ENCODE measurements at regions of chr3 and their contacts with region 1.

Region 1: GRCh38 chr3:143972505-143973255 is 1.1 kb downstream of the DIPK2A start:
- DNase-seq: peak; percentile 48 to 93 (median 76)

Region 2: DNA sequence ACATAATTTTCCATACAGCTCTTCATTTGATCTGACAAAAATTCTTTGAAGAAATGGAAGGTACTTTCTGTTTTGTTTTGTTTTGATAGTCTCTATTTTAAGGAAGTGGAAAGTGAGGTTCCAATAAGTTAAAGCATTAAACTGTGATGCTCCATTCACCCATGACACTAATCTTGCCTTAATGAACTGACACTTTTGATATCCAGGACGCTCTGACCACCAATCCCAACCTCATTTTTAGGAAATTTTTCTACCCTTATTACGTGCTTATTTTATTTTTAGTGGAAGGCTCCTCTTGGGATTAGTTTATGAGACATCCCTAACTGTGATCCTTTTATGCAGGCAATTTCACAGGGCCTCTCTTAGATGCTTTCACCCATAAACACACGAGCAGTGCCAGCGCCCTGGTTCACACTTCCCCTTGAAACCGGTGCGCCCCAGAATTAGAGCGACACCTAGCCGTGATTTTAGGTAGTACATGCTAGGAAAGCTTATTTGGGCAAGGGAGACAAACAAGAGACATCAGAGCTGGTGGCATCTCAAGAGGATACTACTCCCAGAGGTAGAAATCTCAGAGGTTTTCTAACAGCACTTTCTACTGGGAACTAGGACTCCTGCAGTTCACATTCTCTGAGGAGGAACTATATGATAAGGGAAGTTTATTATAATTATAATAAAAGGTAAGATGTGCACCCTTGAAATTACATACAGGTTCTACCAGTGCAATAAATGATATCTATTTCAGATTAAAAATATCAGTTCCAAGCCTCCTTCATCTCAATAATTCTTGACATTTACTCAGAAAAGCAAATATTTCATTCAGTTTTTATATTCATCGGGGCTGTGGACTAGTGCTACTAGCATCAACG is 298.3 kb before region 1 on chr3:
- intact Hi-C with region 1: no loop called
- DNase-seq: peak; percentile 25 to 90 (median 69)

Region 3: DNA sequence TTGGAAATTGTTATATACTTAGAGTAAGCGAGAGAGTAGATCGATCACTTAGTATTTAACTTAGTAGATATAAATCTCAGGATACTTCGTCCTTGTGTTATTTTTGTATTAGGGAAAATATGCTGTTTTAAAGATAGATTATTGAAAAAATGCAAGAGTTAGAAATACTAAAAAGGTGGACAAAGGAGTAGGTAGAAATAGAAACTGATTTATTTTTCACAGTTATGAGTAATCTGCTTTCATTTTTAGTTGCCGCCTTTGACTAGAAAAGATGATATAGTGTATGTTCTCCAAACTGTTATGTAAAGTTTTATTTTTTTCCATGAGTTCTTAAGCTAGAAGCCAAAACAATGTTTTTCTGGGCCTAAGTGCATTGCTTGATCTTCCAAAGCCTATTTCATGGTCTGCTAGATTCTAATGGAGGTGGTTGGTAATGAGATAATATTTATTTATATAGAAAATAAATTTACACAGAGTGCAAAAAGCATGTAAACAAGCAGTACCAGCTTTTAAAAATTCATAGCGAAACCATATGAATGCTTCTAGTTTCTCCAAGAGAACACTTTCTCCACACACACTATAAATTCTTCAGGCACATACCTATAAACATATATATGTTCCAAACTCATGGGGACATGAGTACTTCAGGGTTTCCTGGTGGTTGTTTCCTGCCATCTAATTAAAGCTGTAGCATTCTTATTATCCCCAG is 60.0 kb after region 1 on chr3:
- intact Hi-C with region 1: loop called (anchors 5 kb)
- DNase-seq: no peak

Region 4: GRCh38 chr3:144079634-144080033 is 107.0 kb after region 1 on chr3:
- intact Hi-C with region 1: no loop called
- DNase-seq: no peak

Region 5: GRCh38 chr3:144109944-144110343 is 137.3 kb after region 1 on chr3:
- intact Hi-C with region 1: no loop called
- DNase-seq: no peak

Region 6: DNA sequence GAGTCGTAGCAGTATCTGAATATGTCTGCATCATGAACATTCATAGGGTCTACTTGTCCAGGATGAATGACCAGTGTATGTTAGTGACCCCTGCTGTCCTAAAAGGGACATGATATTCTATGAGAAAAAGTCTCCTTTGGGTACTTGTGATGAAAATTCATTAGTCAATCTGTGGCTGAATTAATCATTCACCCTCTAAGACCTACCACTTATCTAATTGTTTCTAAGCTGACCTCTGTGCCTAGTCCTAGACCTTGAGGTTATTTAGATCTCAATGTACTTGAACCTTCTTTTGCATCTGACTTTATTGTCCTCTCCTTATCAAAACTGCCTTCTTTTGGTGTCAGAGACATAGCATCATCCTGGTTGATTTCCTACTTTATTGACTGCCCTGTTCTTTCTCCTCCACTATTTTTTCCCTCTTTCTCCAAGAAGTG is 798.3 kb after region 1 on chr3:
- intact Hi-C with region 1: loop called (anchors 2 kb)
- DNase-seq: peak in 8 of 42 donors; percentile 16 to 77 (median 52)